ENCODE measurements at regions of chr14 and their contacts with region 1.

Region 1: GRCh38 chr14:21437063-21437901 is 18.6 kb downstream of the CHD8 start:
- DNase-seq: peak; percentile 97 to 100 (median 99)
- ATAC-seq: peak; percentile 97 to 98
- H3K4me3 Mint-ChIP-seq: peak overlapping the region; percentile 88 to 97 (median 95)
- H3K27ac Mint-ChIP-seq: peak overlapping the region; percentile 90 to 98 (median 96)
- H3K4me1 Mint-ChIP-seq: peaks cover 40 to 81% (median 75%) of the 10 kb centered on the region in 4 donors
- H3K27me3 Mint-ChIP-seq: no peaks in the 10 kb centered on the region

Region 2: DNA sequence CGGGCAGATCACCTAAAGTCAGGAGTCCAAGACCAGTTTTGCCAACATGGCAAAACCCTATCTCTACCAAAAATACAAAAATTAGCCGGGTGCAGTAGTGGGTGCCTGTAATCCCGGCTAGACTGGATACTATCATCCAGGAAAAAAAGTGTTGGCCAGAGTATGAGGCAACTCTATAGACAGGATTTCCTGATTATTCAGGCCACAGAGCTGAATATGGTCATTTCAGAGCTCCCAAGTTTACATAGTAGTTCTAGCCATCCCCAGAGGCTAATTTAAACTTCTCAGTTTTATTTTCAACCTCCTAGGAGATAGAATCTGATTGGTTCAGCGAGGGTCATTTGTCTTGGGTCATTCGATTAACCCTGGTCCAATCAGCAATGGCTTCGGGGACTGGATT is 150.1 kb before region 1 on chr14:
- POLR2A ChIA-PET with region 1: no interaction called
- DNase-seq: no peak
- ATAC-seq: no peak
- H3K4me3 Mint-ChIP-seq: no peak overlapping the region
- H3K27ac Mint-ChIP-seq: peak overlapping the region in 1 of 10 donors; percentile 48
- H3K4me1 Mint-ChIP-seq: peaks cover 0 to 2% (median 0%) of the 10 kb centered on the region in 4 donors
- H3K27me3 Mint-ChIP-seq: peaks cover 0 to 6% (median 4%) of the 10 kb centered on the region in 5 donors

Region 3: DNA sequence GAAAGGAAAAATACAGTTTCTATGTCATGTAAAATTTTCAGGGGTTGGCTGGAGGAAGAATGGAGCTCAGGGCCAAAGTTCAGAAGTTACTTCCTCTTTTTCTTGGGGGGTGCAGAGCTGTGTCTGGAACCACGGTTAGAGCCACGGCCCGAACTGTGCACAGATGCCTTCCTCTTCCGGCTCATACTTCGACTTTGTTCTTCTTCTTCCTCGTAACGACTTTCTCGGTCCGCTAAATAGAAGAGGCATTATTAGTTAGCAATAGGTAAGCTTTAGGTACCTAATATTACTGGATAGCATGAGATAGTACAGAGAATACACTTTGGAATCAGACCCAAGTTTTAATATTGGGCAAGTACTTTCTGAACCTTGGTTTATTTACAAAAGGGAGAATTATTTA is 84.7 kb before region 1 on chr14:
- POLR2A ChIA-PET with region 1: no interaction called
- DNase-seq: peak in 1 of 10 donors; percentile 4
- ATAC-seq: no peak
- H3K4me3 Mint-ChIP-seq: no peak overlapping the region
- H3K27ac Mint-ChIP-seq: peak overlapping the region in 7 of 10 donors; percentile 5 to 74 (median 53)
- H3K4me1 Mint-ChIP-seq: peaks cover 0 to 10% (median 4%) of the 10 kb centered on the region in 4 donors
- H3K27me3 Mint-ChIP-seq: no peaks in the 10 kb centered on the region

Region 4: DNA sequence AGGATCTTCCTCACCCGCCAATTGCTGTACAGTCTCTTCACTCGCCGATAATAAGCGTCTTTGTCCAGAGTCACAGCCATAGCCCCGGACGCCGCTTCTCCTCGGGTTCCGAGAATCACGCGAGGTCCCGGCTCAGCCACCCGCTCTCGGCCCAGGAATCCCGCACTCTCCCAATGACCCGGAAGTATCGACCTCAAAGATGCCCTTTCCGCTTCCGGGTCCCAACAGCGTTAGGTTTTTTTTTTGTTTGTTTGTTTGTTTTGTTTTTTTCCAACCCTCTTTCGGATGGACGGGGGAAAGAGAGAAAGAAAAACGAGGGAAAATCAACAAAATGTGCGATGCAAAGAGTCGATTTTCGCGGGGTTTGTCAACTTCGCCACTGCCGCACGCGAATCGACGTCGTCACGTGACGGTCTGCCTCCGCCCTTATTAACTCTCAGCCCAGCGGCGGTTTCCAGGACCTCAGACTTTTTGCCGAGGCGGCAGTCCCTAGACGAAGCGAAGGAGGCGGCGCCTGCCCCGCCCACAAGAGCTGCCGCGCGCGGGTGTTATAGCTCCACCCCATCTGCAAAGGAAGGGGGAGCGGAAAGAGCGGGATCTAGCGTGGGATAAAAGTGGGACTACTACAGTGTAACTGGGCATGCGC is 53.3 kb before region 1 on chr14 and contains the start of gene SUPT16H:
- POLR2A ChIA-PET with region 1: interaction called, 14 read pairs
- DNase-seq: peak; percentile 83 to 94 (median 88)
- ATAC-seq: peak; percentile 90 to 92
- H3K4me3 Mint-ChIP-seq: peak within 1 kb of the TSS; percentile 94 to 100 (median 98)
- H3K27ac Mint-ChIP-seq: peak within 1 kb of the TSS; percentile 97 to 100 (median 99)
- H3K4me1 Mint-ChIP-seq: peaks cover 16 to 48% (median 42%) of the 10 kb centered on the region in 4 donors
- H3K27me3 Mint-ChIP-seq: no peaks in the 10 kb centered on the region
- polyA plus RNA-seq, gene SUPT16H: 66.8 to 72.3 (median 70.2) TPM

Region 5: GRCh38 chr14:21395444-21395843 is 41.8 kb before region 1 on chr14:
- POLR2A ChIA-PET with region 1: no interaction called
- DNase-seq: no peak
- ATAC-seq: no peak
- H3K4me3 Mint-ChIP-seq: no peak overlapping the region
- H3K27ac Mint-ChIP-seq: no peak overlapping the region
- H3K4me1 Mint-ChIP-seq: peaks cover 0 to 2% (median 0%) of the 10 kb centered on the region in 4 donors
- H3K27me3 Mint-ChIP-seq: no peaks in the 10 kb centered on the region

Region 6: DNA sequence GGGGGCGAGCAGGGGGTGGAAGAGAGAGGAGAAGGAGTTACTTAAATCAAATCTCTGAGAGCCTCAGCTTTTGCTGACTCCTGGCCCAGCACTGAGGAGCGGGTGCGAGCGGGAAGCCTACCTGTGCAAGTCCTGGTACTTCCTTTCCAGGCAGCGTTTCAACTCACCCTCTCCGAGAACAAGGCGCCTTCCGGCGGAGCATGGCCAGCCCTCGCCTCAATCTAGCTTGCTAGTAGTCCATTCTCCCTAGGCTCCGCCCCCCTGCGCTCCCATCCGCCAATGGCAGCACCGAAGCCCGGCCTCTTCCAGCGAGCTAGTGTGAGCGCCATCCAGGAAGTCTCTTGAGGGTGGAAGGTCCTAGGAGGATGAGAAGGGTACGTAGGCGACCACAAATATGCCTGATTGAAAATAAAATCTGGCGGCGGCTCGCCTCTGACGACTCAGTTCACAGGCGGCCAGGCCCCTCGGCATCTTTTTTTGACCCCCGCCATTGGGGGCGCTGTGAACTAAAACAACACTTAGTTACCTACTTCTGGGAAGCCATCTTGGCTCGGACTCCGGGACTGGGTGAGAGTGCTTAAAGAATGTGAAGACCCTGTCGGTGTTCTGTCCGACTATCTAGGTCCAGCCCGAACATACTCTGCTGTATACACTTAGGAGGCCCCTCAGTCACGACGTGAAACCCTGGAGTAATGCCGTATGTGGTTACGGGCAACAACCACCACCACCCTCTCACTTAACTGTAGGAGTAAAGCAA is 18.8 kb after region 1 on chr14 and contains the start of gene CHD8:
- POLR2A ChIA-PET with region 1: interaction called, 137 read pairs
- DNase-seq: peak; percentile 95 to 100 (median 100)
- ATAC-seq: peak; percentile 96
- H3K4me3 Mint-ChIP-seq: peak within 1 kb of the TSS; percentile 93 to 100 (median 99)
- H3K27ac Mint-ChIP-seq: peak within 1 kb of the TSS; percentile 95 to 100 (median 100)
- H3K4me1 Mint-ChIP-seq: peaks cover 14 to 48% (median 42%) of the 10 kb centered on the region in 4 donors
- H3K27me3 Mint-ChIP-seq: no peaks in the 10 kb centered on the region
- polyA plus RNA-seq, gene CHD8: 20.7 to 34.9 (median 29.4) TPM

Region 7: GRCh38 chr14:21476925-21477681 is 39.8 kb after region 1 on chr14 and contains the starts of genes RAB2B and TOX4:
- POLR2A ChIA-PET with region 1: interaction called, 34 read pairs
- DNase-seq: peak; percentile 79 to 99 (median 97)
- ATAC-seq: peak; percentile 95 to 96
- H3K4me3 Mint-ChIP-seq: peak within 1 kb of the TSS; percentile 93 to 100 (median 100)
- H3K27ac Mint-ChIP-seq: peak within 1 kb of the TSS; percentile 97 to 100 (median 99)
- H3K4me1 Mint-ChIP-seq: peaks cover 13 to 51% (median 42%) of the 10 kb centered on the region in 4 donors
- H3K27me3 Mint-ChIP-seq: no peaks in the 10 kb centered on the region
- polyA plus RNA-seq, gene RAB2B: 8.7 to 11.0 (median 9.9) TPM
- polyA plus RNA-seq, gene TOX4: 68.6 to 87.5 (median 75.8) TPM

Region 8: GRCh38 chr14:21510735-21511657 is 73.7 kb after region 1 on chr14 and contains the start of gene METTL3:
- POLR2A ChIA-PET with region 1: interaction called, 14 read pairs
- DNase-seq: peak; percentile 76 to 98 (median 92)
- ATAC-seq: peak; percentile 99
- H3K4me3 Mint-ChIP-seq: peak within 1 kb of the TSS; percentile 92 to 99 (median 98)
- H3K27ac Mint-ChIP-seq: peak within 1 kb of the TSS; percentile 96 to 99 (median 98)
- H3K4me1 Mint-ChIP-seq: peaks cover 19 to 44% (median 39%) of the 10 kb centered on the region in 4 donors
- H3K27me3 Mint-ChIP-seq: no peaks in the 10 kb centered on the region
- polyA plus RNA-seq, gene METTL3: 12.4 to 24.5 (median 20.5) TPM

Measured in naive thymus-derived CD8-positive, alpha-beta T cell (primary cell).